GM10248 (cell line): ENCODE measurements at regions of chr5 and their contacts with region 1.

Region 1: DNA sequence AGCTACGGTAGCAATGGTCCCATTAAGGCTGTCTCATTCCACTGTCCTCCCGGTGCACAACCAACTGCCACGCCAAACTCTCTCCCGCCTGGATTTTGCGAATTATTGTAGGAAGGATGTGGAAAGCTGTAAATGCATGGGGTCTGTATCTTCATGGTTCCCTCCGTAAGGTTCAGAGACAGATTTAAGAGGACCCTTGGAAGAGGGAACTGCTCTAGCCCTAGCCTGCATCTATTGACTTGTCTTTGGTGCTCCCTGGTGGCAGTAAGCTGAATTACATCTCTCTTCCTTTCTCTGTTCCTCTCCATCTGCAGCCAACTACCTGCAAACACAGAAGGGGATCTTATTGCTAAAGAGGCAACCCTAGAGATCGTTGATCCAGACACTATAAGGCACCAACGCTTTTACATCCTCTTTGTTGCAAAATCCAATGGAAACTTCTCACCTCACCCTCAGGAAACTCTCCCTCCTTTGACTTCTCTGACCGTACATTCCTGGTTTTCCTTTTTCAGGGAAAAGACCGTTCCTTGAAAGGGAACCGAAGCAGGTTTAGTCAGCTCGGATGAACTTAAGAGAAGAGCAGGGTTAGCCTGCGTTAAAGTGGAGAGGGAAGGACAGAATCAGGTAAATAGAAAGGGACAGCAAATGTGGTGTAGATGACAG is 11.9 kb downstream of the CAPSL start:
- DNase-seq: peak; percentile 61
- CTCF ChIP-seq: peak; percentile 83

Region 2: GRCh38 chr5:35089334-35090314 is 836.9 kb before region 1 on chr5:
- CTCF ChIA-PET with region 1: interaction called, 13 read pairs
- POLR2A ChIA-PET with region 1: no interaction called
- DNase-seq: peak; percentile 52
- CTCF ChIP-seq: peak; percentile 81

Region 3: DNA sequence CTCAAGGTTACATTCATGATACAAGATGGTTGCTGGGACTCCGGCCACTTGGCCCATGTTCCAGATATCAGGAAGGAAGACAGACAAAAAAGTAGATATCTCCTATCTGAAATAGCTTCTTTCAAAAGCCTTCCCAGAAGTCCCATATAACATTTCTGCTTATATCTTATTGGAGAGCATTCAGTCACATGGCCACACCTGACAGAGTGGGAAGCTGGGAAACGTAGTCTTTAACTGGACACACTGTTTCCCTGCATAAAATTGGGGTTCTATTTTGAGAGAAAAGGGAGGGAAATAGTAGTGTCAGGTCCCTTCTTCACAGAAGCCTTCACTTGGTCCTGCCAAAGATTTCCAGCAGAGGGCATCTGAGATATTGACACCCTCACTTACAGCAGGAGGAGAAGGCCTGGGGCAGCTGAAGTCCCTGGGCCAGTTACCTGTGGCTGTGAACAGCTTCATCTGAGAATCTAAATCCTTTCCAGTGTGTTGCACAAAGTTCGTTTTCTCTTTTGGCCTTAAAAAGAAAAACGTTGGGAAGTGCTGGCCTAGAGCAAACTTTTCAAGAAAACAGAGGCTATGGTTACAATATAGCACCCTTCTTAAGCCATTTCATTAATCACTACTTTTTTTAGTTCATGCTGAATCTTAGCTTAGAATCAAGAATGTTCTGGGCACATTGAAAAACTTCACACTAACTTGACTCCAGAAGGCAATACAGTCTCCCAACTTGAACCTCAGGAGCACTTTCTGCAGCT is 275.3 kb before region 1 on chr5:
- CTCF ChIA-PET with region 1: interaction called, 87 read pairs
- POLR2A ChIA-PET with region 1: no interaction called
- DNase-seq: peak; percentile 17
- CTCF ChIP-seq: peak; percentile 58

Region 4: DNA sequence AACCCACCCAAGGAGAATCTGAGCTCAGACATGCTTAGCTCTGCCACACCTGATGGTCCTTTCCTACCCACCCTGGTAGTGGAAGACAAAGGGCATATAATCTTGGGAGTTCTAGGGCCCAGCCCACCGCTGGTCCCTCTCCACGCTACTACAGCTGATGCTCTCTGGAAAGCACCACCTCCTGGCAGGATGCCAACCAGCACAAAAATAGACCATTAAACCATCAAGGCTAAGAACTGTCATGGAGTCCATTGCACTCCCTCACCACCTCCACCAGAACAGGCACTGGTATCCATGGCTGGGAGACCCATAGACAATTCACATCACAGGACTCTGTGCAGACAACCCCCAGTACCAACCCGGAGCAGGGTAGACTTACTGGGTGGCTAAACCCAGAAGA is 180.9 kb before region 1 on chr5:
- CTCF ChIA-PET with region 1: interaction called, 10 read pairs
- POLR2A ChIA-PET with region 1: no interaction called
- DNase-seq: no peak
- CTCF ChIP-seq: no peak

Region 5: DNA sequence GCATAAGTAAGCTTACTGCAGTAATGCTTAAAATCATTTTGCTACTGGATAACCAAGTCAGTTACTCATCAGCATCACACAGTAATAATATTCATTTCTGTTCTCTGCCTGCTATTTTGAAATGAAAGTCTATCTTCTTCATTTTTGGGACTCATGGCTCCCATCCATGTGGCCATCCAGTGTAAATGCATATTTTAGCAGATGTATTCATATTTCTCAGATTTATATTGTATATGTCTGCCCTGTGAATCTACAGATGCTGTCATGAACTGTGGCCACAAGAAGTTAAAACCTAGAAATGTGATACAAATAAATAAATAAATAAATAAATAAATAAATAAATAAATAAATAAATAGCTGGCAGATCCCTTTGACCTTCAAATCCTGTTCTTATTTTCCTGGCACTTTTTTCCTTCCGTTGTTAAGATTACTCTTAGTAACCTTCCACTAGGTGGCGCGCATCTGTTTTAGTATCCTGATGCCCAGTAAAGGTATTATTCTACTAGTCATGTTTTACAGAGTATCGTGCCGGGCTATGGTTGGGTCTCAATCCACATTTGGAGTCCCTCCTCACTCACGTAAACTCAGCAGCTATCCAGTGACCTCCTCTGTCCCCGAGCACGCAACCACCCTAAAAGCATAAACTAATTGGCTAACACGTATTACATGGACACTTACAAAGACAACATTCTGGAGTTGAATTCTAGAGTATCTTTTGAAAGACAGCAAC is 149.0 kb before region 1 on chr5:
- CTCF ChIA-PET with region 1: interaction called, 342 read pairs
- POLR2A ChIA-PET with region 1: no interaction called
- DNase-seq: peak; percentile 29
- CTCF ChIP-seq: peak; percentile 61

Region 6: DNA sequence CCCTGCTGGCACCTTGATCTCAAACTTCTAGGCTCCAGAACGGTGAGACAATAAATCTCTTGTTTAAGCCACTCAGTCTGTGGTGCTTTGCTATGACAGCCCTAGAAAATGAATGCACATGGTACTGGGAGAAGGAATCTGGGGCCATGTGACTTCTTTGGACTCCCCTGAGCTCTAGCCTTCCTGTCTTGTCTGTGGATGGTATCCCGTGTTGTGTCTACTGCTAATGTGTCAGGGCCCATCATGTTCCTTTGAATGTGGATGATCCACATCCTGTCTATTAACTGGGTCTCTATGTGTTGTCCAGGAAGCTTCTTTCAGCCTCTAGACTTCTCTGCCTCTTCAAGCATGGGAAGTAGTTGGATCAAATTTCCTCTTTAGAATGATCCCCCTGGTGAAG is 44.8 kb before region 1 on chr5:
- CTCF ChIA-PET with region 1: interaction called, 21 read pairs
- POLR2A ChIA-PET with region 1: no interaction called
- DNase-seq: no peak
- CTCF ChIP-seq: no peak

Region 7: DNA sequence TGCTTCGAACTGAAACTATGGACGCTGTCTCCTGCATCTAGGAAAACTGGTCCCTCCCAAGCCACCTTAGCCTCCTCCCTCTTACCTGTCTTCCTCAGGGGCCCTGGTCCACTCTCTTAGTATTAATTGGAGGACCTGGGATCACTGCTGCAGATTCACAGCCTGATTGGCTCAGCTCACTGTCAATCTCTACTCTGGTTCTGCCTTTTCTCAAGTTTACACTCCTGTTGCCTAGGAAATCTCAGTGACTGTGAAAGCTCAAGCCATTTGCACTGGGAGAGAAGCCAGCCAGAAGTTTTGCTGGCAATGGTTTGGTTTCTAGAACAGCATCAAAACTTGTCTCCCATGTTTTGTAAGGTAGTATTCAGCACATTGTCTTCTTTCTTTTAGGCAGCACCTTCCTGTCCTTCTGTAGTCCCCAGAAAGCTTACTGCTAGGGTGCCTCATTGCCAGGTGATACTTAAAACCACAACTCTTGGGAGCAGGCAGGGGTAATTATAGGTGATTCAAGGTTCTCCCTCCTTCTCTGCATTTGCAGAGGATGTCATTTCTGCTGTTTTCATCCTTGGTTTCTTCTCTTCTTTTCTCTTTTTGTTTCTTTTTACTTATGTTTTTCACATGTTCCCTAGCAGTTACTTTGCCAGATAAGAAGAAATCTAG is 12.2 kb after region 1 on chr5 and contains the start of gene CAPSL:
- CTCF ChIA-PET with region 1: interaction called, 57 read pairs
- POLR2A ChIA-PET with region 1: no interaction called
- DNase-seq: no peak
- CTCF ChIP-seq: no peak

Region 8: GRCh38 chr5:36252722-36253365 is 326.3 kb after region 1 on chr5:
- CTCF ChIA-PET with region 1: no interaction called
- POLR2A ChIA-PET with region 1: no interaction called
- DNase-seq: no peak
- CTCF ChIP-seq: no peak